ENCODE measurements at regions of chr3 and their contacts with region 1.

Region 1: DNA sequence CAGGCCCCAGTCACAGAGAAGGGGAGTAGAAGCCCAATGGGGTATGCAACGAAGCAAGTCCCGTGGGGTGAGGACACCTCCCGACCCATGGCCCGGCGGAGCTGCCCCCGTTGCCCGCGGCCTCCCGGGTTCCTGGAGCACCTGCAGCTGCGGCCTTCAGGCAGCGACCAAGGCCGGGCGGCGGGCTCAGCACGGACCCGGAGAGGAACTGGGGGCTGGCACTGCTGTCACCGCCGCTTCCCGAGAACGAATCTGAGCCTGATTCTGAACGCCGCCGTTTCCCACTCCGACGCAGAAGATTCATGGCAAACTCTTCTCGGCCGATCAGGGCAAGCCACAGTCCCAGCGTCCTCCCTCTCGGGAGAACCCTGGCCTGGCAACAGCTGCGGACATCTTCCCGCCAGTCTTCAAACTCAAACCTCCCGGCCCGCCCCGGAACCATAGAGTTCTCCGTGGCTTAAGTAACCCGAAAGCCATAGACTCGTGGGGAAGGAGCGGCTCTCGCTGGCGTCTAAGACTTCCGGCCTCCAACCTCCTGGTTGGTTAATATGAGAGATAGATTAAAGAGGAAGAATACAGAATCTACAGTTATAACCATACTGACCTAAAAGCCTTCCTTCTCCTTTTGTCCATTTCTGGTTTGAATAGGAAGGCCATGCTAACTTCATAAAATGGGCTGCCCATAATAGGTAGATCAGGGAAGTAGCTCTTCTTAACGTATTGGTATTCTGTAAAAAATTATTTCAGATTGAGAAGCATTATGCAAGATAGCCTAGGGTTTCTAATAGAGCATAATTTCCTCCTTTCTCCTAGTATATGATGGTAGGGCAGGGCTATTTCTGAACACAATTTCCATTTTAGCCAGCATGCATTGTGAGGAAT is at the start of gene POLQ:
- DNase-seq: peak; percentile 68
- ATAC-seq: peak; percentile 99
- H3K4me3 ChIP-seq: peak within 1 kb of the TSS; percentile 71 to 72
- H3K27ac ChIP-seq: peak within 1 kb of the TSS; percentile 90
- H3K4me1 ChIP-seq: peaks cover 4% of the 10 kb centered on the region; the same call in 1 of the 2 replicates
- H3K27me3 ChIP-seq: no peaks in the 10 kb centered on the region
- CTCF ChIP-seq: no peak
- total RNA-seq, gene POLQ: 11.9 TPM

Region 2: DNA sequence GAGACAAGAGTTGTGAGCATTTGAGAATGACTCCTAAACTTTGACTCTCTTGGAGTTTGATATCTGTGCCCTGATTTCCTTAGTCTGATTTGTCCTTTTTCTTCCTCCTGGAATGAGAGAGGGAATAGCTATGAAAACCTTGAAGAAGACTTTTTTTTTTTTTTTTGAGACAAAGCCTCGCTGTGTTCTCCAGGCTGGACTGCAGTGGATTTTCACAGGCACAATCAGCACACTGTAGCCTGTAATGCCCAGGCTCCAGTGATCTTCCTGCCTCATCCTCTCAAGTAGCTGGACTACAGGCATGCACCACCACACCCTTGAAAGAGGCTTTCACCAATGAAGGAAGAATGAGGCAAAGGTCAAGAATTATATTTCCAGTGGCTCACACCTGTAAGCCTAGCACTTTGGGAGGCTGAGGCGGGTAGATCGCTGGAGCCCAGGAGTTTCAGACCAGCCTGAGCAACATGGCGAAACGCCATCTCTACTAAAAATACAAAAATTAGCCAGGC is 11.7 kb after region 1 on chr3:
- CTCF ChIA-PET with region 1: no interaction called
- POLR2A ChIA-PET with region 1: no interaction called
- in situ Hi-C with region 1: no loop called
- intact Hi-C with region 1: no loop called
- DNase-seq: no peak
- ATAC-seq: no peak
- H3K4me3 ChIP-seq: no peak overlapping the region
- H3K27ac ChIP-seq: no peak overlapping the region
- H3K4me1 ChIP-seq: no peaks in the 10 kb centered on the region
- H3K27me3 ChIP-seq: no peaks in the 10 kb centered on the region
- CTCF ChIP-seq: no peak

Region 3: DNA sequence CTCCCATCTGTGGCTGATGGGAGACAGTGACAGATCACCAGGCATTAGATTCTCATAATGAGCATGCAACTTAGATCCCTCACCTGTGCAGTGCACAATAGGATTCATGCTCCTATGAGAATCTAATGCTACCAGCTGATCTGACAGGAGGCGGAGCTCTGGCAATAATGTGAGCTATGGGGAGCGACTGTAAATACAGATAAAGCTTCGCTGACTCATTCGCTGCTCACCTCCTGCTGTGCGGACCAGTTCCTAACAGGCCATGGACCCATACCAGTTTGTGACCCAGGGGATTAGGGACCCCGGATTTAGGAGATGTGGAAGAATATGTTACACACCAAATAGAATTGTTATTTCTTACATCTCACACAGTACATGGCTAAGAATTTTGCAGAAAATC is 28.6 kb after region 1 on chr3:
- CTCF ChIA-PET with region 1: no interaction called
- POLR2A ChIA-PET with region 1: no interaction called
- in situ Hi-C with region 1: no loop called
- intact Hi-C with region 1: no loop called
- DNase-seq: no peak
- ATAC-seq: peak; percentile 65; the same call in 1 of the 2 replicates
- H3K4me3 ChIP-seq: no peak overlapping the region
- H3K27ac ChIP-seq: no peak overlapping the region
- H3K4me1 ChIP-seq: 0 out of 2 replicates have a peak, but pooled peaks cover 3% of the 10 kb centered on the region
- H3K27me3 ChIP-seq: no peaks in the 10 kb centered on the region; the same call in 1 of the 2 replicates
- CTCF ChIP-seq: no peak

Region 4: DNA sequence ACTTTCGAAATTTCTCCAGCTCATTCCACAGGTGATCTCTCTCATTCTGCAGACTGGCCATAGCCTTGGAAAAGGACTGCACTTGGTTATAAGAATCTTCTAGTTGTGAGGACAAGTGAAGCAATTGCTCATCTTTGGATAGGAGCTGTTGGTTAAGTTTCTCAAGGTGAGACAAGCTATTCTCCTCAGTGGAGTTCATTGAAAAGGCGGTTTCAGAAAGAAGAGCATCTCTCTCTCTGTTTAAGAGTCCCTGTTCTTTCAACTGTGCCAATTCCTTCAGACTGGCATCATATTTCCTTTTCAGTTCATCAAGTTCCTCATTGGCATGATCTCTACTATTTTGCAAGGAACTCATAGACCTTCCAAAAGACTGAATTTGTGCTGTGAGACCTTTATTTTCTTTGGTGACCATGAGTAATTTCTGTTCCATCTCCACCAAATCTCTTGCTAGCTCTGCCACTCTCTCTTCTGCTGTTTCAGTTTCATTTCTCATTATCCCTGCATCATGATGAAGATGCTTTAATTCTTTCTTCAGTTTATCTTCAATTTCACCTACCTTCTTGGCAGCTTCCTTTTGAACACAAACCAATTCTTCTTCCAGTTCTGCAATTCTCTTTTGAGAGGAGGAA is 145.1 kb after region 1 on chr3:
- CTCF ChIA-PET with region 1: no interaction called
- POLR2A ChIA-PET with region 1: no interaction called
- in situ Hi-C with region 1: no loop called
- intact Hi-C with region 1: no loop called
- DNase-seq: no peak
- ATAC-seq: no peak
- H3K4me3 ChIP-seq: no peak overlapping the region
- H3K27ac ChIP-seq: no peak overlapping the region
- H3K4me1 ChIP-seq: no peaks in the 10 kb centered on the region
- H3K27me3 ChIP-seq: no peaks in the 10 kb centered on the region
- CTCF ChIP-seq: no peak

Region 5: DNA sequence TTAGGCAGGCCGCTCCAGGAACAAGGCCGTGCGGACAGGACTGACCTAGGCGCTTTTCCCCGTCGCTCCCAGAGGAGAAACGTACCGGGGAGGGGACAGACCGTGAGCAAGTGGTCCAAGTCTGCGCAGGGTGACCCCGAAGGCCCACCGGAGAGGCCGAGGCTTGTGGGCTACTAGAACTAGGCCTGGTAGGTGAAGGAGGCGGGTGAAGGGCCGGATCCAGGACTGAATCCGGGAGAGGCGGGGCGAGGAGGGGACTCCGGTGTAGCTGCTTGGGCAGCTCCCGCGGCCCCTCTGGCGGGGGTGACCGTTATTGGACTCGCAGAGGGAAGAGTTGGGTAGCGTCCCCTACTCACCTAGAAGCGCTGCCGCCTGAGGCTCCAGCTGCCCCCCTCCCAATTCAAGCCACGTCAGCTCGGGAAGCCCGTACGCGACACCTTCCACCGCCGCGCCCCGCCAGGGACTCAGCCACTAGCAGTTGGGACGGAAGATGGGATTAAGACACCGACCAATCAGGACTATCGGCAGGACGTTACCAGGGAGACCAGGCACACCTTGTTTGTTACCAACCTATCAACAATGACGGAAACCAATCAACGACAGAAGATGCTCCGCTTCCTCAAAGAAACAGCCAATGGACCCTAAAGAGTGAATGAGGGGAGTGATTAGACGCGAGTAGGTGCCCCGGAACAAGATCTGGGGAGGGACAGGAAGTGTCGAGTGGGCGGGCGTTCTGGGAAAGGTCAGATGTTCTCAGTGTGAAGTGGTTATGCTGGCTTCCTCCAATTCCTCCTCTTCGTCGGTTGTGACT is 203.7 kb after region 1 on chr3 and contains the start of gene GOLGB1:
- CTCF ChIA-PET with region 1: no interaction called
- POLR2A ChIA-PET with region 1: interaction called, 4 read pairs
- in situ Hi-C with region 1: no loop called
- intact Hi-C with region 1: loop called (anchors 5 kb)
- DNase-seq: peak; percentile 98
- ATAC-seq: peak; percentile 98
- H3K4me3 ChIP-seq: peak within 1 kb of the TSS; percentile 94 to 98
- H3K27ac ChIP-seq: peak within 1 kb of the TSS; percentile 94
- H3K4me1 ChIP-seq: peaks cover 17% of the 10 kb centered on the region
- H3K27me3 ChIP-seq: no peaks in the 10 kb centered on the region
- CTCF ChIP-seq: no peak
- total RNA-seq, gene GOLGB1: 49.7 TPM

Region 6: GRCh38 chr3:121995161-121996137 is 449.6 kb after region 1 on chr3:
- CTCF ChIA-PET with region 1: no interaction called
- POLR2A ChIA-PET with region 1: no interaction called
- in situ Hi-C with region 1: no loop called
- intact Hi-C with region 1: loop called (anchors 5 kb)
- DNase-seq: peak; percentile 15
- ATAC-seq: peak; percentile 90
- H3K4me3 ChIP-seq: no peak overlapping the region
- H3K27ac ChIP-seq: no peak overlapping the region
- H3K4me1 ChIP-seq: no peaks in the 10 kb centered on the region
- H3K27me3 ChIP-seq: no peaks in the 10 kb centered on the region
- CTCF ChIP-seq: peak; percentile 79

Region 7: GRCh38 chr3:122092460-122093165 is 546.8 kb after region 1 on chr3:
- CTCF ChIA-PET with region 1: no interaction called
- POLR2A ChIA-PET with region 1: no interaction called
- in situ Hi-C with region 1: no loop called
- intact Hi-C with region 1: loop called (anchors 10 kb)
- DNase-seq: no peak
- ATAC-seq: peak; percentile 62; the same call in 1 of the 2 replicates
- H3K4me3 ChIP-seq: no peak overlapping the region
- H3K27ac ChIP-seq: no peak overlapping the region
- H3K4me1 ChIP-seq: no peaks in the 10 kb centered on the region
- H3K27me3 ChIP-seq: peaks cover 15% of the 10 kb centered on the region
- CTCF ChIP-seq: peak; percentile 56

Region 8: GRCh38 chr3:122258757-122259371 is 713.0 kb after region 1 on chr3:
- CTCF ChIA-PET with region 1: no interaction called
- POLR2A ChIA-PET with region 1: no interaction called
- in situ Hi-C with region 1: no loop called
- intact Hi-C with region 1: loop called (anchors 10 kb)
- DNase-seq: peak; percentile 32
- ATAC-seq: peak; percentile 95
- H3K4me3 ChIP-seq: no peak overlapping the region
- H3K27ac ChIP-seq: no peak overlapping the region
- H3K4me1 ChIP-seq: no peaks in the 10 kb centered on the region
- H3K27me3 ChIP-seq: peaks cover 32% of the 10 kb centered on the region
- CTCF ChIP-seq: peak; percentile 84

Region 9: DNA sequence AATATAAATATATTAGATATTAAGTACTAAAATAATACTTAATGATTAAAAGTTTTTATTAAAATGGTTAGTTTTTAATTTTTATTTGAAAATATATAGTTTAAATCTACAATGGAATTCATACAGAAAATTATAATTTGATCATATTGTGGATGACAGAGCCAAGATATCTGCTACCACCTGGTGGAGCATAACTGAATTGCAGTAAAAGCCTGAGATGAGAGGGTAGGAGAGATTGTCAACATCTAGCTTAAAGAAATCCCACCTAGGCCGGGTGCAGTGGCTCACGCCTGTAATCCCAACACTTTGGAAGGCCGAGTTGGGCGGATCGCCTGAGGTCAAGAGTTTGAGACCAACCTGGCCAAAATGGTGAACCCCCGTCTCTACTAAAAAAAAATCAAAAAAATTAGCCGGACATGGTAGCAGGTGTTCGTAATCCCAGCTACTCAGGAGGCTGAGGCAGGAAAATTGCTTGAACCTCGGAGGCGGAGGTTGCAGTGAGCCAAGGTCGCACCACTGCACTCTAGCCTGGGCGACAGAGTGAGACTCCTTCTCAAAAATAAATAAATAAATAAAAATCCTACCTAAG is 754.2 kb after region 1 on chr3:
- CTCF ChIA-PET with region 1: no interaction called
- POLR2A ChIA-PET with region 1: no interaction called
- in situ Hi-C with region 1: no loop called
- intact Hi-C with region 1: loop called (anchors 10 kb)
- DNase-seq: peak; percentile 5
- ATAC-seq: peak; percentile 71; the same call in 1 of the 2 replicates
- H3K4me3 ChIP-seq: no peak overlapping the region
- H3K27ac ChIP-seq: no peak overlapping the region
- H3K4me1 ChIP-seq: no peaks in the 10 kb centered on the region
- H3K27me3 ChIP-seq: no peaks in the 10 kb centered on the region
- CTCF ChIP-seq: peak; percentile 84

Region 10: GRCh38 chr3:122365073-122365472 is 819.3 kb after region 1 on chr3:
- CTCF ChIA-PET with region 1: interaction called, 3 read pairs
- POLR2A ChIA-PET with region 1: no interaction called
- in situ Hi-C with region 1: no loop called
- intact Hi-C with region 1: loop called (anchors 10 kb)
- DNase-seq: no peak
- ATAC-seq: peak; percentile 5; the same call in 1 of the 2 replicates
- H3K4me3 ChIP-seq: no peak overlapping the region
- H3K27ac ChIP-seq: peak overlapping the region; percentile 68
- H3K4me1 ChIP-seq: peaks cover 31% of the 10 kb centered on the region
- H3K27me3 ChIP-seq: no peaks in the 10 kb centered on the region
- CTCF ChIP-seq: no peak

Region 11: GRCh38 chr3:122510878-122511535 is 965.2 kb after region 1 on chr3:
- CTCF ChIA-PET with region 1: no interaction called
- POLR2A ChIA-PET with region 1: no interaction called
- in situ Hi-C with region 1: no loop called
- intact Hi-C with region 1: no loop called
- DNase-seq: no peak
- ATAC-seq: no peak
- H3K4me3 ChIP-seq: no peak overlapping the region
- H3K27ac ChIP-seq: no peak overlapping the region
- H3K4me1 ChIP-seq: peaks cover 24% of the 10 kb centered on the region
- H3K27me3 ChIP-seq: no peaks in the 10 kb centered on the region
- CTCF ChIP-seq: no peak